Common myeloid progenitor, CD34-positive (primary cell): ENCODE measurements at regions of chr3 and their contacts with region 1.

Region 1: GRCh38 chr3:52028572-52028971 is 27.8 kb downstream of the DUSP7 start:
- DNase-seq: no peak
- H3K4me3 ChIP-seq: no peak overlapping the region
- H3K27ac ChIP-seq: no peak overlapping the region
- H3K4me1 ChIP-seq: peaks cover 0 to 5% (median 3%) of the 10 kb centered on the region in 4 experiments
- H3K27me3 ChIP-seq: no peaks in the 10 kb centered on the region

Region 2: DNA sequence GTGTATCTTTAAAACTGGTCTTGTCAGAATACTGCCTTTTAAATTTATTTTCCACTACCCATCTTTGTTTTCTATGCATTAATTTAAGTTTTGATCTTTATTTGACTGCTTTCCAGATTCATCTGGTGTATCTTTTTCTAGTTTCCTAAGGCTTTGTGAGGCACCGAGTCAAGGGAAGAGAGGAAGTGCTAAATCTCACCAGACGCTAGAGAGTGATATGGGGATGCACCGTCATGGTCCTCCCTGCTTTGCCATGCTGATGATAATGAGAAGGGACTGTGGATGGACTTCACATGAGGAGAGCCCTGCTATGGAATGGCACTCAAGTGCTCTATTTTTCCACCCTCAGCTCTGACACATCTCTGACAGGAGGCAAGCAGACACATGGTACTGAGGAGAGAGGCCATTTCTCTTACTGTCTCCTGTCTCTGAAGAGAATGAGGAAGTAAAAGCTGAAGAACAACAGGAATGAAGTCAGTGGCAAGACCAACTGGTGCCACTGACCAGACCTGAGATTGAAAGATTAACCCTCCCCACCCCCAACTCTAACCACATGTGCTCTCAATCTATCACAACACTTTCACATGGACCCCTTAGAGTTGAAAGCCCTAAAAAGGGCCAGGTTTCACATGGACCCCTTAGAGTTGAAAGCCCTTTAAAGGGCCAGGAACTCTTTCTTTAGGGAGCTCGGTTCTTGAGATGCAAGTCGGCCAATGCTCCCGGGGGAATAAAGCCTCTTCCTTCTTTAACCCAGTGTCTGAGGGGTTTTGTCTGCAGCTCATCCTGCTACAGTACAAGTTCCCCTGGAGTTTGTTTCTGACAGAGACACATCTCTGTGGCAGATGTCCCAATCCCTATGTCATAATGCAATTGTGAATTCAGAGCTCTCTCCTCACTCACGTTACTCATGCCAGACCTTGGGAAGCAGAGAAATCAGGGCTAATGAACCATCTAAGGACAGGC is 167.6 kb before region 1 on chr3 and contains the start of gene IQCF2:
- CTCF ChIA-PET with region 1: no interaction called
- POLR2A ChIA-PET with region 1: no interaction called
- DNase-seq: peak in 2 of 3 donors; percentile 33 to 60
- H3K4me3 ChIP-seq: no peak within 1 kb of the TSS
- H3K27ac ChIP-seq: no peak within 1 kb of the TSS
- H3K4me1 ChIP-seq: peaks cover 0 to 9% (median under 1%) of the 10 kb centered on the region in 4 experiments
- H3K27me3 ChIP-seq: peaks cover 0 to 4% (median 0%) of the 10 kb centered on the region in 5 experiments

Region 3: GRCh38 chr3:52041118-52041731 is 12.7 kb after region 1 on chr3:
- CTCF ChIA-PET with region 1: interaction called, 13 read pairs
- POLR2A ChIA-PET with region 1: no interaction called
- DNase-seq: no peak
- H3K4me3 ChIP-seq: no peak overlapping the region
- H3K27ac ChIP-seq: no peak overlapping the region
- H3K4me1 ChIP-seq: peaks cover 0 to 11% (median 6%) of the 10 kb centered on the region in 4 experiments
- H3K27me3 ChIP-seq: no peaks in the 10 kb centered on the region

Region 4: DNA sequence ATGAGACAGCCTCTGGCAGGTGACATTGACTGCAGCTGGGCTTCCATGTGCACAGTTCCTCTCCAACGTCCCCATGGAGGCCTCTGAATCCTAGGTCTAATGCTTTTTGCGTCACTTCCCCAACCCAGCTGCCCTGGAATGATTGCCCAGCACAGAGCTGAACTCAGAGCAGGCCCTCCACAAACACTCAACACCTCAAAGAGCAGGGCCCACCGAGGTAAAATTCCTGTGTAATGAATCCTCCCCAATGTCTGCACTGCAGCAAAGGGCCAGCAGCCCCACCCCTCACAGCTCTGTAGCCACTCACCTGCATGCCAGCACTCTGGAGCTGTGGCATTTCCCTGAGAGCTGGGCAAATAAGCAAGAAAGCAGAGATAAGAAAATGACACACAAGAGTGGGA is 70.4 kb after region 1 on chr3:
- CTCF ChIA-PET with region 1: no interaction called
- POLR2A ChIA-PET with region 1: no interaction called
- DNase-seq: no peak
- H3K4me3 ChIP-seq: no peak overlapping the region
- H3K27ac ChIP-seq: no peak overlapping the region
- H3K4me1 ChIP-seq: peaks cover 0 to 5% (median 0%) of the 10 kb centered on the region in 4 experiments
- H3K27me3 ChIP-seq: no peaks in the 10 kb centered on the region